GM12878 (cell line): ENCODE measurements at regions of chr10 and their contacts with region 1.

Region 1: GRCh38 chr10:112140110-112140970 is 43.2 kb downstream of the GPAM start:
- DNase-seq: peak; percentile 8
- ATAC-seq: peak; percentile 99
- H3K4me3 ChIP-seq: no peak overlapping the region
- H3K27ac ChIP-seq: no peak overlapping the region
- H3K4me1 ChIP-seq: no peaks in the 10 kb centered on the region
- H3K27me3 ChIP-seq: no peaks in the 10 kb centered on the region
- CTCF ChIP-seq: peak; percentile 92 to 97 (median 96); a peak in 5 of 6 replicates
- EP300 ChIP-seq: no peak
- POLR2A ChIP-seq: no peak
- RAD21 ChIP-seq: peak; percentile 68

Region 2: GRCh38 chr10:110304780-110305421 is 1835.4 kb before region 1 on chr10 and contains the start of gene SMNDC1:
- CTCF ChIA-PET with region 1: interaction called, 4 read pairs
- POLR2A ChIA-PET with region 1: no interaction called
- RAD21 ChIA-PET with region 1: interaction called, 3 read pairs
- SMC1A ChIA-PET with region 1: no interaction called
- in situ Hi-C with region 1: loop called (anchors 25 kb)
- intact Hi-C with region 1: no loop called
- DNase-seq: peak; percentile 89
- ATAC-seq: peak; percentile 91
- H3K4me3 ChIP-seq: peak within 1 kb of the TSS; percentile 81
- H3K27ac ChIP-seq: peak within 1 kb of the TSS; percentile 88
- H3K4me1 ChIP-seq: peaks cover 7% of the 10 kb centered on the region; the same call in 1 of the 2 replicates
- H3K27me3 ChIP-seq: no peaks in the 10 kb centered on the region
- CTCF ChIP-seq: no peak
- EP300 ChIP-seq: no peak
- POLR2A ChIP-seq: peak; percentile 88
- RAD21 ChIP-seq: no peak
- polyA plus RNA-seq, gene SMNDC1: 10.1 to 12.9 TPM

Region 3: GRCh38 chr10:111756217-111757061 is 383.9 kb before region 1 on chr10:
- CTCF ChIA-PET with region 1: interaction called, 15 read pairs
- POLR2A ChIA-PET with region 1: no interaction called
- RAD21 ChIA-PET with region 1: interaction called, 4 read pairs
- SMC1A ChIA-PET with region 1: interaction called, 8 read pairs
- in situ Hi-C with region 1: loop called (anchors 10 kb)
- intact Hi-C with region 1: loop called (anchors 1 kb)
- DNase-seq: no peak
- ATAC-seq: peak; percentile 82
- H3K4me3 ChIP-seq: no peak overlapping the region
- H3K27ac ChIP-seq: no peak overlapping the region
- H3K4me1 ChIP-seq: no peaks in the 10 kb centered on the region
- H3K27me3 ChIP-seq: no peaks in the 10 kb centered on the region
- CTCF ChIP-seq: peak; percentile 49 to 57 (median 55)
- EP300 ChIP-seq: no peak
- POLR2A ChIP-seq: no peak
- RAD21 ChIP-seq: peak; percentile 18; the same call in 1 of the 2 replicates

Region 4: GRCh38 chr10:112126901-112127300 is 13.4 kb before region 1 on chr10:
- CTCF ChIA-PET with region 1: interaction called, 50 read pairs
- POLR2A ChIA-PET with region 1: no interaction called
- RAD21 ChIA-PET with region 1: interaction called, 3 read pairs
- SMC1A ChIA-PET with region 1: interaction called, 3 read pairs
- in situ Hi-C with region 1: no loop called
- intact Hi-C with region 1: no loop called
- DNase-seq: no peak
- ATAC-seq: no peak
- H3K4me3 ChIP-seq: no peak overlapping the region
- H3K27ac ChIP-seq: no peak overlapping the region
- H3K4me1 ChIP-seq: no peaks in the 10 kb centered on the region
- H3K27me3 ChIP-seq: peaks cover 0 to 2% of the 10 kb centered on the region in 2 experiments; a peak in 2 of 4 replicates
- CTCF ChIP-seq: no peak
- EP300 ChIP-seq: no peak
- POLR2A ChIP-seq: no peak
- RAD21 ChIP-seq: no peak

Region 5: DNA sequence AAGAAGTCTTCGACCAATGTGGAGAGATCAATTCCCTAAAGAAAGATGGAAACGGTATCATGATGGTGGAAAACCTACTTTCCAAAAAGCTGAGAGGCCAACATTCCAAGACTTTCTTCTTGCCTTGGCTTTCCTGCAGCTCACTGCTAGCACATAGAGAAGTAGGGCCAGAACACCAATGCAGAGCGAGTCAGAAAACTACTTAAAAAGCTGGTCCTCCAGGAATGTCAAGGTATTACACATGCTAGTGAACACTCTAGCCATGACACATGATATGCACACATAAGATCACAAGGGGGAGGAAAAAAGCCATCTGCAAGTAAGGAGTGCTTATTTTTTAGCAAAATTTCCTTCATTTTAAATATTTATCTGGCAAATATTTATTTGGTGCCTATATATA is 20.5 kb after region 1 on chr10:
- CTCF ChIA-PET with region 1: interaction called, 13 read pairs
- POLR2A ChIA-PET with region 1: no interaction called
- RAD21 ChIA-PET with region 1: no interaction called
- SMC1A ChIA-PET with region 1: interaction called, 3 read pairs
- in situ Hi-C with region 1: no loop called
- intact Hi-C with region 1: no loop called
- DNase-seq: no peak
- ATAC-seq: no peak
- H3K4me3 ChIP-seq: no peak overlapping the region
- H3K27ac ChIP-seq: no peak overlapping the region
- H3K4me1 ChIP-seq: no peaks in the 10 kb centered on the region
- H3K27me3 ChIP-seq: no peaks in the 10 kb centered on the region
- CTCF ChIP-seq: no peak
- EP300 ChIP-seq: no peak
- POLR2A ChIP-seq: no peak
- RAD21 ChIP-seq: no peak

Region 6: DNA sequence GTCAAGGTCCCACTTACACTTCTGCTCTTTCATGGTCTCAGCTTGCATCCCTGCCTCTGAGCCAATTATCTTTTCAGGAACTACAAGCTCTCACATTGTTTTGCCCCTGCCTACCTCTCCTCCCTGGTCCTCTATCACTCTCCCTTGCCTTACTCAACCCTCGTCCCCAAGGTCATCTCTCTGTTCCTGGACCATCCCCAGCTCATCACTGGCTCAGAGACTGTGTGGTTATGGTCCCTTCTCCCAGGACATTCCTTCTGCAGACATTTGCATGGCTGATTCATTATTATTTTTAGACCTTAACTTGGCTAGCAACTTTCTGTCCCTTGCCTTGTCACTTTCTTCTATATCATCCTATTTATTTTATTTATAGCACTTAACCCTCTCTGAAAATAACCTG is 61.0 kb after region 1 on chr10:
- CTCF ChIA-PET with region 1: no interaction called
- POLR2A ChIA-PET with region 1: no interaction called
- RAD21 ChIA-PET with region 1: no interaction called
- SMC1A ChIA-PET with region 1: no interaction called
- in situ Hi-C with region 1: no loop called
- intact Hi-C with region 1: no loop called
- DNase-seq: no peak
- ATAC-seq: no peak
- H3K4me3 ChIP-seq: no peak overlapping the region
- H3K27ac ChIP-seq: no peak overlapping the region
- H3K4me1 ChIP-seq: peaks cover 3% of the 10 kb centered on the region; the same call in 1 of the 2 replicates
- H3K27me3 ChIP-seq: no peaks in the 10 kb centered on the region
- CTCF ChIP-seq: no peak
- EP300 ChIP-seq: no peak
- POLR2A ChIP-seq: no peak
- RAD21 ChIP-seq: no peak

Region 7: DNA sequence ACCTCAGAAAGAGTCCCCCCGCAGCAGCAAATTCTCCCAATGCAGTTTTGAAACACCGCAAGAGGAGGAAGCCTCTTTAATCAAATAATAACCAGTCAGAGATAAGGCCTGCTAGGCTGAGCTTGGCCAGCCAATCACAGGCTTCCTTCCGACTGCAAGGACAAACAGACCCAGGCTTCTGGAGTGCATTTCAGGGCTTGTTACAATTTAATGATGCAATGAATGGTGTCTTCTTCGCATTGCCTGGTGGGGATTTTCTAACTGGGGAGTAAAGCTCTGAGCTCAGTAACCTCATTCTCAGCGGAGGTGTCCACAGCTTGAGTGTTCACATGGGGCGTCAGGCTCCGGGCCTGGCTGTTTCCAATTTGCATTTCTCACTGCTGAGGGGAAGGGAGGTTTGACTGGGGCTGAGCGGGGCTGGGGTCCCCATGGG is 75.0 kb after region 1 on chr10:
- CTCF ChIA-PET with region 1: no interaction called
- POLR2A ChIA-PET with region 1: no interaction called
- RAD21 ChIA-PET with region 1: no interaction called
- SMC1A ChIA-PET with region 1: no interaction called
- in situ Hi-C with region 1: no loop called
- intact Hi-C with region 1: no loop called
- DNase-seq: no peak
- ATAC-seq: no peak; the same call in 2 of the 3 replicates
- H3K4me3 ChIP-seq: no peak overlapping the region
- H3K27ac ChIP-seq: no peak overlapping the region
- H3K4me1 ChIP-seq: no peaks in the 10 kb centered on the region
- H3K27me3 ChIP-seq: peaks cover 0 to 4% of the 10 kb centered on the region in 2 experiments; a peak in 3 of 4 replicates
- CTCF ChIP-seq: no peak
- EP300 ChIP-seq: no peak
- POLR2A ChIP-seq: no peak
- RAD21 ChIP-seq: no peak

Region 8: GRCh38 chr10:112307358-112308124 is 167.2 kb after region 1 on chr10:
- CTCF ChIA-PET with region 1: interaction called, 32 read pairs
- POLR2A ChIA-PET with region 1: no interaction called
- RAD21 ChIA-PET with region 1: no interaction called
- SMC1A ChIA-PET with region 1: interaction called, 5 read pairs
- in situ Hi-C with region 1: loop called (anchors 5 kb)
- intact Hi-C with region 1: no loop called
- DNase-seq: no peak
- ATAC-seq: peak; percentile 89
- H3K4me3 ChIP-seq: no peak overlapping the region
- H3K27ac ChIP-seq: no peak overlapping the region
- H3K4me1 ChIP-seq: no peaks in the 10 kb centered on the region
- H3K27me3 ChIP-seq: no peaks in the 10 kb centered on the region
- CTCF ChIP-seq: peak; percentile 75 to 84 (median 78)
- EP300 ChIP-seq: no peak
- POLR2A ChIP-seq: no peak
- RAD21 ChIP-seq: peak; percentile 68

Region 9: GRCh38 chr10:112434988-112435619 is 294.8 kb after region 1 on chr10:
- CTCF ChIA-PET with region 1: interaction called, 11 read pairs
- POLR2A ChIA-PET with region 1: no interaction called
- RAD21 ChIA-PET with region 1: interaction called, 9 read pairs
- SMC1A ChIA-PET with region 1: interaction called, 13 read pairs
- in situ Hi-C with region 1: no loop called
- intact Hi-C with region 1: no loop called
- DNase-seq: no peak
- ATAC-seq: peak; percentile 63; the same call in 2 of the 3 replicates
- H3K4me3 ChIP-seq: no peak overlapping the region
- H3K27ac ChIP-seq: no peak overlapping the region
- H3K4me1 ChIP-seq: no peaks in the 10 kb centered on the region
- H3K27me3 ChIP-seq: no peaks in the 10 kb centered on the region
- CTCF ChIP-seq: peak in 2 of 3 experiments; percentile 6 to 37; a peak in 2 of 6 replicates
- EP300 ChIP-seq: no peak
- POLR2A ChIP-seq: no peak
- RAD21 ChIP-seq: peak; percentile 40